T-cell (primary cell): ENCODE measurements at regions of chr7 and their contacts with region 1.

Region 1: DNA sequence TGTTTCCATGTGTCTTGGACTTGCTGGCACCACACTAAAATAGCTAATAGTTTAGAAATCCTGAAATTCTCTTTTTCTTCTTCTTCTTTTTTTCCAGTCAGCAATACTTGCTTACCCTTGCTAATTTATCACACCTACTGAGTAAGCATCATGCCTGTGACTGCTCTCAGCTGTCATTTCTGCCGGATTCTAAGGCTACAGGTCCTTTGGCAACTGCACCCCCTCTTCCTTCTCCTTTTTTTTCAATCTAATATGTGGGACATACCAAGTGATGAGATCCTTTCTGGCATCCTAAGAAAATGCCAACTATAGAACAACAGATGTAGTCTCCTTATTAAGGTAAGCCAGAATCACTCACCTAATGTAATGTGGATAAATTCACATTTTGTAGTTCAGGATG is 444.7 kb downstream of the MAGI2 start:
- DNase-seq: no peak
- ATAC-seq: no peak
- H3K4me3 ChIP-seq: no peak overlapping the region
- H3K4me3 Mint-ChIP-seq: no peak overlapping the region
- H3K27ac ChIP-seq: no peak overlapping the region
- H3K27ac Mint-ChIP-seq: no peak overlapping the region
- H3K4me1 ChIP-seq: no peaks in the 10 kb centered on the region
- H3K4me1 Mint-ChIP-seq: no peaks in the 10 kb centered on the region
- H3K27me3 ChIP-seq: no peaks in the 10 kb centered on the region
- H3K27me3 Mint-ChIP-seq: no peaks in the 10 kb centered on the region

Region 2: DNA sequence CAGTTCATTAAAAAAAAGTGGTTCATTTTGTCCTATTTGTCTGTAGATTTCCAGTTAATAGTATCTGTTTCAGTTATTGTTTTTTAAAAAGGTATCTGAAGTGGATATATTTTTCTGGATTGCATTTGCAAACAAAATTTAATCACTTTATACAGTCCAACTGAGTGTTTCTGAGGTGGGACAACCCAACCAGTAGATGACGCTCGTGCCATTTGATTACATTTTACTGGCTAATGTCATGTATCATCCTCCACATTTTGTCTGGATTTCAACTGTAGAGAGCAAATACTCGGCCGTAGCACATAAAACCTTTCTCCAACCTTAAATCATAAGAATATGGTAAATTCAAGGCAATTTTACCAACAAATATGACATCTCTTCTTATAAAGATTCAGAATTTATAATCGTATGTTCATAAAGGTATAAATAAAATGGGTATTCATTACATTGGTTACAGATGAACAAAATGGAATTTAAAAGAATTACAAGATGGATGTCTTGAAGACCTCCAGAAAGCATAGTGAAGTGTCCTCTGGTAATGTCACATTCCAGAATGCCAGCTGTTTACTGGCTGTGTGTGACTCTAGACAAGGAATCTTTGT is 421.2 kb before region 1 on chr7:
- CTCF ChIA-PET with region 1: no interaction called
- POLR2A ChIA-PET with region 1: interaction called in 1 of 2 experiments, 17 read pairs
- DNase-seq: no peak
- ATAC-seq: no peak
- H3K4me3 ChIP-seq: no peak overlapping the region
- H3K4me3 Mint-ChIP-seq: no peak overlapping the region
- H3K27ac ChIP-seq: no peak overlapping the region
- H3K27ac Mint-ChIP-seq: no peak overlapping the region
- H3K4me1 ChIP-seq: no peaks in the 10 kb centered on the region
- H3K4me1 Mint-ChIP-seq: no peaks in the 10 kb centered on the region
- H3K27me3 ChIP-seq: no peaks in the 10 kb centered on the region
- H3K27me3 Mint-ChIP-seq: no peaks in the 10 kb centered on the region

Region 3: DNA sequence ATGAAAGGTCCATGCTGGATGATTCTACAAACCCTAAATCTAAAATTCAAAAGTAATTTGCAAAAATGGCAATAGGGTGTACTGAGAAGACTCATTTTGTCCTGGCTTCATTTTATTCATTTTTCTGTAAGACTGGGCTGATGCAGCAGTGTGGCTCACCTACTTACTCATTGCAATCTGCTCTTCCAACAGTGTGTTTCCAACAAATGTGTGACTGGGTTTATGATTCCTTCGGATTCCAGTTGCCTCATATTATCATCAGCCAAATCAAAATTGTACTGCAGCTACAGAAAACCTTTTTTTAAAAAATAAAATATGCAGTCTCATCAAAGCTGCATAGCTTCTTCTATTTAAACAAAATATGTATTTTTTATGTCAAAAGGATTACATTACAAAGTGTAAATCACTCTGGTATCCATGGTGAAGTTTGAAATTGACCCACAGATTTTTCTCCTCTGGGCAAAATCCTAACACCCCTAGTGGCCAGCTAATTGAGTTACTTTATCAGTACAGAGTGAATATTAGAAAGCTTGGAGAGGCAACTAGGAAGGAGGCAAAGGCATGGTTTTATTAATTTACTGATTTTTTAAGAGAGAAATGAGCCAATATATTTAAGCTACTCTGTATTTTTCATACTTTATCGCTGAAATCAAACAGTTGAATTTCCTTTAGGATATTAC is 54.4 kb after region 1 on chr7:
- CTCF ChIA-PET with region 1: no interaction called
- POLR2A ChIA-PET with region 1: no interaction called
- DNase-seq: no peak
- ATAC-seq: no peak
- H3K4me3 ChIP-seq: no peak overlapping the region
- H3K4me3 Mint-ChIP-seq: no peak overlapping the region
- H3K27ac ChIP-seq: no peak overlapping the region
- H3K27ac Mint-ChIP-seq: no peak overlapping the region
- H3K4me1 ChIP-seq: no peaks in the 10 kb centered on the region
- H3K4me1 Mint-ChIP-seq: no peaks in the 10 kb centered on the region
- H3K27me3 ChIP-seq: no peaks in the 10 kb centered on the region
- H3K27me3 Mint-ChIP-seq: no peaks in the 10 kb centered on the region

Region 4: DNA sequence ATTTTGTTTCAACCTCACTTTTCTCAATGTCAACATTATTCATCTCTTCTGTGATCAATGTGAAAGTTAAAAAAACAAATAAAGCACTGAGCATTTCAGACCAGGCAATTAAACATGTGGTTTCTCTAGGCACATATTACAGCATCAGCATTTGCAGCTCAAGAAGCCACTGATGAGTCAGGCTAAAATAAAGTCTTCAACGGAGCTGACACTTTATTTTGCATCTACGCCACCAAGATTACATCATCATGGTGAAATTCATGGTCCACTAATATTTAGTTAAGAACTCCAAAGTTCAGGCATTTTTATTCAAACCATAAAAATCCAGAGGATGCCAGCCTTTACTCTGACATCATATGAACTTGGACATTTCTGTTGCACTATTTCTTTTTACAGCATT is 411.7 kb after region 1 on chr7:
- CTCF ChIA-PET with region 1: no interaction called
- POLR2A ChIA-PET with region 1: no interaction called
- DNase-seq: no peak
- ATAC-seq: no peak
- H3K4me3 ChIP-seq: no peak overlapping the region
- H3K4me3 Mint-ChIP-seq: no peak overlapping the region
- H3K27ac ChIP-seq: no peak overlapping the region
- H3K27ac Mint-ChIP-seq: no peak overlapping the region
- H3K4me1 ChIP-seq: no peaks in the 10 kb centered on the region
- H3K4me1 Mint-ChIP-seq: no peaks in the 10 kb centered on the region
- H3K27me3 ChIP-seq: no peaks in the 10 kb centered on the region
- H3K27me3 Mint-ChIP-seq: peaks cover 0 to 4% of the 10 kb centered on the region in 2 donors